Endothelial cell of umbilical vein (primary cell): ENCODE measurements at regions of chr6 and their contacts with region 1.

Region 1: GRCh38 chr6:25263657-25264056 is 15.5 kb upstream of the CARMIL1 start:
- DNase-seq: no peak
- H3K4me3 ChIP-seq: no peak overlapping the region
- H3K27ac ChIP-seq: no peak overlapping the region
- H3K4me1 ChIP-seq: no peaks in the 10 kb centered on the region
- H3K27me3 ChIP-seq: no peaks in the 10 kb centered on the region
- CTCF ChIP-seq: no peak
- POLR2A ChIP-seq: no peak

Region 2: DNA sequence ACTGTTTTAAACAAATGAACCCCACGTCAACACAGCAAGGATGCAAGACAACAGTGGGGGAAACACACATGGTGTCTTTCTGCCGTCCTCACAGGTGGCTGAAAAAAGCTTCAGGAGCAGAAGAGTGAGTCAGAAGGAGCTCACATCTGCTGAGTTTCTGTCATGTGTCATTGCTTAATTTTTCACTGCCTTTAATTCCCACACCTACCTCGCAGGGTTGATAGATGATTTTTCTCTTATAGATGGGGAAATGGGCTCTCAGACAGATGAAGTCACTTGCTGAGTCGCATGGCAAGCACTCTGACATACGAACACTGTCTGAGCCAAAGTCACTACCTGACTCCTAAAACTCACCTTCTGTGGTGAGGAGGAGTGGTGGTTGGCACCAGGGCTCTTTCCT is 12.8 kb before region 1 on chr6:
- CTCF ChIA-PET with region 1: interaction called, 25 read pairs
- POLR2A ChIA-PET with region 1: no interaction called
- dilution Hi-C with region 1: no loop called
- intact Hi-C with region 1: no loop called
- DNase-seq: no peak
- H3K4me3 ChIP-seq: no peak overlapping the region
- H3K27ac ChIP-seq: no peak overlapping the region
- H3K4me1 ChIP-seq: no peaks in the 10 kb centered on the region
- H3K27me3 ChIP-seq: peaks cover 0 to 3% of the 10 kb centered on the region in 2 experiments
- CTCF ChIP-seq: no peak
- POLR2A ChIP-seq: no peak

Region 3: GRCh38 chr6:25278914-25279747 is 15.5 kb after region 1 on chr6 and contains the start of gene CARMIL1:
- CTCF ChIA-PET with region 1: interaction called, 29 read pairs
- POLR2A ChIA-PET with region 1: no interaction called
- dilution Hi-C with region 1: no loop called
- intact Hi-C with region 1: no loop called
- DNase-seq: peak; percentile 70
- H3K4me3 ChIP-seq: peak within 1 kb of the TSS; percentile 74 to 90 (median 87)
- H3K27ac ChIP-seq: peak within 1 kb of the TSS; percentile 18
- H3K4me1 ChIP-seq: peaks cover 10% of the 10 kb centered on the region
- H3K27me3 ChIP-seq: no peaks in the 10 kb centered on the region
- CTCF ChIP-seq: peak; percentile 50 to 84
- POLR2A ChIP-seq: no peak
- total RNA-seq, gene CARMIL1: 8.7 and 8.8 TPM in 2 replicates

Region 4: GRCh38 chr6:25556516-25556915 is 292.9 kb after region 1 on chr6:
- CTCF ChIA-PET with region 1: interaction called, 125 read pairs
- POLR2A ChIA-PET with region 1: no interaction called
- dilution Hi-C with region 1: no loop called
- intact Hi-C with region 1: loop called (anchors 1 kb)
- DNase-seq: peak; percentile 83
- H3K4me3 ChIP-seq: no peak overlapping the region
- H3K27ac ChIP-seq: no peak overlapping the region
- H3K4me1 ChIP-seq: no peaks in the 10 kb centered on the region
- H3K27me3 ChIP-seq: no peaks in the 10 kb centered on the region
- CTCF ChIP-seq: peak; percentile 73 to 85
- POLR2A ChIP-seq: no peak

Region 5: DNA sequence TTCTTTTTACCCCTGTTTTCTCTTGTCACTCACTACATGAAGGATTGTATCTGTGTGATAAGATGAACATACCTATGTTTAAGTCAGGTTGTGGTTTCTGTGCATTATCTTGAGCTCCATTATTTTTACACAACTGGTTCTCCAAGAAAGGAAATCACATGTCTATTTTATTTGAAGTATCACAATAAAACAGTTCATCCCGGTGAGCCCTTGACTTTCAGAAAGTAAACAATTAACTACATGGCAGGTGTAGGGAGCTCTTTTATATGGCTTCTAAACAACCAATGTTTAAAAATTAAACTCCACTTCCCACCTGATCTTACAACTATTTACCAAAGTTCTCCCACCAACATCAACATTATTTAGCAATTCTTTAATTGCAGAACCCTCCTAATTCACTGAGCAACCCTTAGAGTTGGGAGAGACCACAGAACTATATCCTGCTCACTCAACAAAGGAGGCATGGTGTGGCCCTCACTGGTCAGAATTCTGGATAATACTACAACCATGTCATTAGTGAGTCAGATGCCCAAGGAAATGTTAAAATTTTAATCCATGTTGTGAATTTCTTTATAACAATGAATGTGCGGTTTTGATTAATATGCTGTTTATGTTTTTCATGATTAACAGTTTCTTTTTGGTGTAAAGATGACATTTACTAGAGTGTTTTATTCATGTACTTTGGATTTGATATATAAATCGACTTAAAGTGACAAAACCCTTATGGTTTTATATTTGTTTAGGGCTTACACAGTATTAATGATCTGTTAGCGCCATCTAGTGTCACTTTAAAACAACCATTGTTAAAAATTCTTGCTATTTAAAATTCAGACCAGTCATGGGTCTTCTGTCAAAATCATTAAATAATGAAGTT is 338.4 kb after region 1 on chr6:
- CTCF ChIA-PET with region 1: interaction called, 38 read pairs
- POLR2A ChIA-PET with region 1: no interaction called
- dilution Hi-C with region 1: no loop called
- intact Hi-C with region 1: loop called (anchors 1 kb)
- DNase-seq: peak; percentile 62
- H3K4me3 ChIP-seq: no peak overlapping the region
- H3K27ac ChIP-seq: no peak overlapping the region
- H3K4me1 ChIP-seq: no peaks in the 10 kb centered on the region
- H3K27me3 ChIP-seq: peaks cover 0 to 2% of the 10 kb centered on the region in 2 experiments
- CTCF ChIP-seq: peak; percentile 10 to 19
- POLR2A ChIP-seq: no peak

Region 6: DNA sequence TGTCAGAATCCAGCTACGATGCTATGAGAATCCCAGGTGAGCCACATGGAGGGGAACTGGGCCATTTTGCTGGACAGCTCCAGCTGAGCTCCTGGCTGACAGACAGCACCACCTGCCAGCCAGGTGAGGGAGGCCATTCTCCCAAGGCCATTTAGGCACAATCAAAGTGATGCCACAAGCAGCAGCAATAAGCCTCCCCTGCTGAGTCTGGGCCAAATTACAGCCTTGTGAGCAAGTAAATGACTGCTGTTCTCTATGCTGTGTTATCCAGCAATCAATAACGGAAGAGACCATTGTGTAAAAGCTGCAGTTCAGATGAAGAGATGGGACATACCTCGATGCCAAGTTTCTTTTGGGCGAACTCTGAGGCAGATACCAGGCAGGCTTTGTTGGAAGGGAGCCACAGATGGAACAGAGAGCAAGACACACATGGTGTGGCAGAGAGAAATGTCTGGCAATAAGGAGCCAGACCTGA is 374.3 kb after region 1 on chr6:
- CTCF ChIA-PET with region 1: no interaction called
- POLR2A ChIA-PET with region 1: no interaction called
- dilution Hi-C with region 1: no loop called
- intact Hi-C with region 1: no loop called
- DNase-seq: no peak
- H3K4me3 ChIP-seq: no peak overlapping the region
- H3K27ac ChIP-seq: no peak overlapping the region
- H3K4me1 ChIP-seq: no peaks in the 10 kb centered on the region
- H3K27me3 ChIP-seq: no peaks in the 10 kb centered on the region
- CTCF ChIP-seq: no peak
- POLR2A ChIP-seq: no peak

Region 7: GRCh38 chr6:25889877-25890853 is 626.5 kb after region 1 on chr6:
- CTCF ChIA-PET with region 1: interaction called, 17 read pairs
- POLR2A ChIA-PET with region 1: no interaction called
- dilution Hi-C with region 1: no loop called
- intact Hi-C with region 1: no loop called
- DNase-seq: peak; percentile 73
- H3K4me3 ChIP-seq: no peak overlapping the region
- H3K27ac ChIP-seq: no peak overlapping the region
- H3K4me1 ChIP-seq: no peaks in the 10 kb centered on the region
- H3K27me3 ChIP-seq: peaks cover 0 to 1% of the 10 kb centered on the region in 2 experiments
- CTCF ChIP-seq: peak; percentile 16 to 17
- POLR2A ChIP-seq: no peak